BJ (cell line): ENCODE measurements at regions of chr12 and their contacts with region 1.

Region 1: GRCh38 chr12:8078398-8078797 is 3.7 kb upstream of the NECAP1 start:
- DNase-seq: no peak
- H3K4me3 ChIP-seq: no peak overlapping the region
- H3K27me3 ChIP-seq: no peaks in the 10 kb centered on the region
- CTCF ChIP-seq: peak; percentile 60

Region 2: DNA sequence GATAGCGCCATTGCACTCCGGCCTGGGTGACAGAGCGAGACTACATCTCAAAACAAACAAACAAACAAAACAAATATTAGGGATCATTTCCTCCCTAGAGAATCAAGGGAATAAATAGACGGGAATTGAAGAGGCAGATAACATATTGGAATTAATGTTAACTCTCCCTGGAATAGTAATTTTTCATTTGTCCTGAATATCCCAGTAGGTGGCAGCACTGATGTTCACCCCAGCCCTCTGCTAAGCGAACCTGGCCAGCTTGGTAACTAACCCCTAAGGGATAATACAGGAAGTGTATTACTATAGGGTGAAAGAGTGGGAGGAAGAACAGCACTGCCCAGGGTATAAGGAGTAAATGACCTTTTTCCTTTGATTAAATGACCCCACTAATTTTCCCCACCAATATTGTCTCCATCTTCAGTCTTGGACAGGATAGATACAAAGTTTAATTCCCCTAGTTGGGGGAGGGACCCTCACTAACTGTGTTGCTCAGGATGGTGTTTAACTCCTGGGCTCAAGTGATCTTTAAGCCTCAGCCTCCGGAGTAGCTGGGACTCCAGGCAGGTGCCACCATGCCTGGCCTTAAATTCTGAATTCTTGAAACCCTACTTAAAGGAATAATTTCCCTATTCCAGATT is 246.2 kb before region 1 on chr12:
- CTCF ChIA-PET with region 1: interaction called, 12 read pairs
- POLR2A ChIA-PET with region 1: interaction called, 6 read pairs
- DNase-seq: no peak
- H3K4me3 ChIP-seq: no peak overlapping the region
- H3K27me3 ChIP-seq: no peaks in the 10 kb centered on the region
- CTCF ChIP-seq: peak; percentile 63

Region 3: GRCh38 chr12:8032242-8033152 is 45.9 kb before region 1 on chr12 and contains the start of gene FOXJ2:
- CTCF ChIA-PET with region 1: interaction called, 14 read pairs
- POLR2A ChIA-PET with region 1: no interaction called
- DNase-seq: no peak
- H3K4me3 ChIP-seq: peak within 1 kb of the TSS; percentile 85
- H3K27me3 ChIP-seq: no peaks in the 10 kb centered on the region
- CTCF ChIP-seq: peak; percentile 20; the same call in 1 of the 2 replicates
- polyA plus RNA-seq, gene FOXJ2: 5.3 and 6.5 TPM in 2 replicates